Endothelial cell of umbilical vein (primary cell): ENCODE measurements at regions of chr17 and their contacts with region 1.

Region 1: GRCh38 chr17:64129764-64130558 is at the start of gene ERN1:
- DNase-seq: peak; percentile 92
- H3K4me3 ChIP-seq: peak within 1 kb of the TSS; percentile 68 to 92 (median 73)
- H3K27ac ChIP-seq: peak within 1 kb of the TSS; percentile 91
- H3K4me1 ChIP-seq: peaks cover 23% of the 10 kb centered on the region
- H3K27me3 ChIP-seq: no peaks in the 10 kb centered on the region
- CTCF ChIP-seq: no peak
- POLR2A ChIP-seq: peak; percentile 97
- total RNA-seq, gene ERN1: 14.7 and 21.5 TPM in 2 replicates

Region 2: GRCh38 chr17:63946440-63947367 is 183.3 kb before region 1 on chr17:
- CTCF ChIA-PET with region 1: interaction called, 16 read pairs
- POLR2A ChIA-PET with region 1: no interaction called
- dilution Hi-C with region 1: no loop called
- intact Hi-C with region 1: no loop called
- DNase-seq: peak; percentile 23
- H3K4me3 ChIP-seq: no peak overlapping the region
- H3K27ac ChIP-seq: no peak overlapping the region
- H3K4me1 ChIP-seq: no peaks in the 10 kb centered on the region
- H3K27me3 ChIP-seq: no peaks in the 10 kb centered on the region
- CTCF ChIP-seq: peak; percentile 38 to 94
- POLR2A ChIP-seq: no peak

Region 3: GRCh38 chr17:64036198-64036922 is 93.6 kb before region 1 on chr17:
- CTCF ChIA-PET with region 1: interaction called, 802 read pairs
- POLR2A ChIA-PET with region 1: no interaction called
- dilution Hi-C with region 1: loop called (anchors 25 kb)
- intact Hi-C with region 1: no loop called
- DNase-seq: no peak
- H3K4me3 ChIP-seq: no peak overlapping the region
- H3K27ac ChIP-seq: no peak overlapping the region
- H3K4me1 ChIP-seq: no peaks in the 10 kb centered on the region
- H3K27me3 ChIP-seq: no peaks in the 10 kb centered on the region
- CTCF ChIP-seq: no peak
- POLR2A ChIP-seq: no peak

Region 4: DNA sequence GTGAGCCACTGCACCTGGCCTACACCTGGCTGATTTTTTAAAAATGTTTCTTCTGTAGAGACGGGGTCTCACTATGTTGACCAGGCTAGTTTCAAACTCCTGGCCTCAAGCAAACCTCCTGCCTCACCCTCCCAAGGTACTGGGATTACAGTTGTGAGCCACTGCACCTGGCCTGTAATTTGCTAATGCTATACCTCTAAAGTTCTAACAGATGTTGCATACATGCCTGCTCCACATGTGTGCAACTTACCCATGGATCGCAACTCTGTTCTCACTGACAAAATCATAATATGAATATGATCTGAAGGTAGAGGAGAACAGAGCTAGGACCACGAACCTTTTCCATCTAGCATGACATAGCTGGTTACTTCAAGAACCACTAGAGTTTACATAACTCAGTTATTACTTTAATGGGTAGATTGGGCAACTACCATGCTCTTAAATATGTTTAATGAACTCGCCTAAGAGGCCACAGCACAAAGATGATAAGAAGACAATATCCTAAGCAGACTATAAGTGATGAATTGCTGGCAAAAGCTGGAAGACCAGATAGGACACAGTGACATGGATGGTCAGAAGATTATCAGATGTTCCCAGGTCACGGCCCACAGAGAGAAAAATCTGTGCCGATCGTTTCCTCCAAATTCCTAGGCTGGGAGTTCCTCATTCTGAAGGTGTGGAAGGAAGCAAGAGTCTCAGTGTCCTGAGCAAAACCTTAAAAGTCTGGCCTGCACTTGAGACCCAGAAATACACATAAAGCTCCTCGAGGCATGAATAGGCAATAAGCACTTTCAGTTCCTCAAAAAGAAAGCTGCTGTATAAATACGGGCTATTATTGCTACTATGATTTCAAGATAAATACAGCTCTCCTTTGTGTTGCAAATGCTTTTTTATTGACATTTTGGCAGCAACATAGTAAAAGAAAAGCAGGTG is 55.9 kb before region 1 on chr17:
- CTCF ChIA-PET with region 1: interaction called, 27 read pairs
- POLR2A ChIA-PET with region 1: interaction called, 3 read pairs
- dilution Hi-C with region 1: no loop called
- intact Hi-C with region 1: no loop called
- DNase-seq: no peak
- H3K4me3 ChIP-seq: no peak overlapping the region
- H3K27ac ChIP-seq: no peak overlapping the region
- H3K4me1 ChIP-seq: no peaks in the 10 kb centered on the region
- H3K27me3 ChIP-seq: no peaks in the 10 kb centered on the region
- CTCF ChIP-seq: no peak
- POLR2A ChIP-seq: no peak

Region 5: GRCh38 chr17:64166876-64167275 is 36.9 kb after region 1 on chr17:
- CTCF ChIA-PET with region 1: interaction called, 26 read pairs
- POLR2A ChIA-PET with region 1: no interaction called
- dilution Hi-C with region 1: no loop called
- intact Hi-C with region 1: loop called (anchors 1 kb)
- DNase-seq: no peak
- H3K4me3 ChIP-seq: no peak overlapping the region
- H3K27ac ChIP-seq: no peak overlapping the region
- H3K4me1 ChIP-seq: peaks cover 13% of the 10 kb centered on the region
- H3K27me3 ChIP-seq: no peaks in the 10 kb centered on the region
- CTCF ChIP-seq: no peak
- POLR2A ChIP-seq: no peak

Region 6: DNA sequence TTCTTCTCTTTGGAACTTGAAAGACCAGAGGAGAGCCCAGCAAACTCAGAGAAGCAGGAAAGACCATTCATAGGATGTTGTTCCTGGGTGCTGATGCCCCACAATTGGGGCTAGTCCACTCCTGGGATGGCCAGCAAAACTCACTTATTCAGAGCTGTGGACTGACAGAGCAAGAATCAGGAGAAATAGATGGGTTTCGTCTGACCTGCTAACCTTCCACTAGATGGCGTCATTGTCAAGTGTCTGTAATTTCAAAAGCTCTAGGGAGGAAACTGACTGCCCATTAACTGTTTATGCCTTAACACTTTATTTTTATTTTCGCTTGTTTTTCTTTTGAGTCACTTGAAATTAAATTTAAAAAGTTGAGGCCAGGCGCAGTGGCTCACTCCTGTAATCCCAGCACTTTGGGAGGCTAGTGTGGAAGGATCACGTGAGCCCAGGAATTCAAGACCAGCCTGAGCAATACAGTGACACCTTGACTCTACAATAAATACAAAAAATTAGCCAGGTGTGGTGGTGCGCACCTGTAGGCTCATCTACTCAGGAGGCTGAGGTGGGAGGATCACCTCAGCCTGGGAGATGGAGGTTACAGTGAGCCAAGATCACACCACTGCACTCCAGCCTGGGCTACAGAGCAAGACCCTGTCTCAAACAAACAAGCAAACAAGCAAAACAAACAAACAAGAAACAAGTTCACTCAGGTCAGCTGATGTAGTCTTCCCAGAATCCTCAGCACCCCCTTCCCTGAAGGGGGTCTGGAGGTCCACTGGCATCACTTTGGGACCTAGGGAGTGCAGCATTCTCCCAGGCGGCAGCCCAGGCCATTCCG is 290.4 kb after region 1 on chr17:
- CTCF ChIA-PET with region 1: interaction called, 12 read pairs
- POLR2A ChIA-PET with region 1: no interaction called
- dilution Hi-C with region 1: no loop called
- intact Hi-C with region 1: no loop called
- DNase-seq: peak; percentile 76
- H3K4me3 ChIP-seq: no peak overlapping the region
- H3K27ac ChIP-seq: no peak overlapping the region
- H3K4me1 ChIP-seq: peaks cover 6% of the 10 kb centered on the region
- H3K27me3 ChIP-seq: no peaks in the 10 kb centered on the region
- CTCF ChIP-seq: peak; percentile 74 to 75
- POLR2A ChIP-seq: no peak